ENCODE measurements at regions of chr14 and their contacts with region 1.

Region 1: GRCh38 chr14:44912041-44912869 is 49.5 kb downstream of the KLHL28 start:
- DNase-seq: no peak
- H3K4me3 Mint-ChIP-seq: peak overlapping the region; percentile 52
- H3K27ac Mint-ChIP-seq: no peak overlapping the region
- H3K4me1 Mint-ChIP-seq: no peaks in the 10 kb centered on the region
- H3K27me3 Mint-ChIP-seq: peaks cover 17% of the 10 kb centered on the region
- CTCF ChIP-seq: no peak

Region 2: DNA sequence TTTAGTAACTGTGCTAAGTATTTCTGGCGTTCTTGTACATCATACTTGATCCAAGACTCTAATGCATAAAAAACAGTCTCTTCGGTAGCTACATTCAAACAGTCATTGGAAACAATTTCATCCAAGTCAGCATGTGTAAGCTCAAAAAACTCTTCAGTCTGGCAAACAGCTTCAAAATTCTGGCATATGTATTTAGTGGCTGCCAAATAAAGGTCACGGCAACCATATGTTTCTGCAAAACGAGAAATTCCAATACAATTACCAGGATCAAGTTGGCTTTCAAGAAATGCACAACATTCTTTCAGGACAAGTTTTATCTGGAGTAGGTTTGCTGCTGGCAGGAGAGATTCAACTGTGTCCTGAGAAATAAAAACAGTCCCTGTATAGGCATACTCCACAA is 33.0 kb after region 1 on chr14:
- CTCF ChIA-PET with region 1: no interaction called
- intact Hi-C with region 1: no loop called
- DNase-seq: no peak
- H3K4me3 Mint-ChIP-seq: no peak overlapping the region
- H3K27ac Mint-ChIP-seq: no peak overlapping the region
- H3K4me1 Mint-ChIP-seq: no peaks in the 10 kb centered on the region
- H3K27me3 Mint-ChIP-seq: no peaks in the 10 kb centered on the region
- CTCF ChIP-seq: no peak

Region 3: GRCh38 chr14:45083971-45084722 is 171.9 kb after region 1 on chr14 and contains the start of gene PRPF39:
- CTCF ChIA-PET with region 1: no interaction called
- intact Hi-C with region 1: loop called (anchors 10 kb)
- DNase-seq: peak; percentile 96
- H3K4me3 Mint-ChIP-seq: peak within 1 kb of the TSS; percentile 96
- H3K27ac Mint-ChIP-seq: peak within 1 kb of the TSS; percentile 87
- H3K4me1 Mint-ChIP-seq: peaks cover 34% of the 10 kb centered on the region
- H3K27me3 Mint-ChIP-seq: no peaks in the 10 kb centered on the region
- CTCF ChIP-seq: no peak
- total RNA-seq, gene PRPF39: 34.2 and 35.8 TPM in 2 replicates

Region 4: GRCh38 chr14:45134051-45134958 is 222.1 kb after region 1 on chr14 and contains the start of gene FKBP3:
- CTCF ChIA-PET with region 1: no interaction called
- intact Hi-C with region 1: loop called (anchors 2 kb)
- DNase-seq: peak; percentile 92
- H3K4me3 Mint-ChIP-seq: peak within 1 kb of the TSS; percentile 96
- H3K27ac Mint-ChIP-seq: peak within 1 kb of the TSS; percentile 93
- H3K4me1 Mint-ChIP-seq: peaks cover 16% of the 10 kb centered on the region
- H3K27me3 Mint-ChIP-seq: no peaks in the 10 kb centered on the region
- CTCF ChIP-seq: no peak
- total RNA-seq, gene FKBP3: 68.9 and 72.8 TPM in 2 replicates

Region 5: DNA sequence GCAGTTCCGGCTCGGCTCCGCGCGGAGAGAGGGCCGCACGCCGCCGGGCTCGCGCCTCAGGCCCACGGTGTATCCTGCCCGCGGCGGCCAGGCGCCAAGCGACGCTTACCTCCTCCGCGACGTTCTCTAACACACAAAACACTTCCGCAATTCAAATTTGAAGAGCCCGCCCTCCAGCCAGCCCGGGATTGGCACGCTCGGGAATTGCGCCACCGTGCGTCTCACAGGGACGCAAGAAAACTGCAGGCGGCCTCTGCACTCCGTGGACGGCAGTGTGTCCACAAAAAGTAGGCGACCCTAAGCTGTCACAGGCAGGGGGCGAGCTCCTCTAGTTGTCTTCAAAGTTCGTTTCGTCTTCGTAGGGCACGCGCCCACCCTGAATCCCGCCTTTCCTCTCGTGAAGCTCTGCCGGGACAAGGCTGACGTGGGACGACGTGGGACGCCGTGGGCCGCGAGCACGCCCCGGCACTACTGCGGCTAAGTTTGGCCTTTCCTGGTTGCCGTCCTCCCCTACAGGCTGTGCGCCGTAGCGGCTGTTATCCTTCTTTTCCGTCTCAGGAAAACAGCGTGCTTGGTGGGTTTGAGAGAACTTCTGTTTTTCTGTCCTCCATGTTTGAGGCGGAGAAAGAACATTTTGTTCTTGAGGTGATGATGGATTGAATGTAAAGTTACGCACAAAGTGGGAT is 341.0 kb after region 1 on chr14 and contains the start of gene MIS18BP1:
- CTCF ChIA-PET with region 1: no interaction called
- intact Hi-C with region 1: loop called (anchors 5 kb)
- DNase-seq: peak; percentile 95
- H3K4me3 Mint-ChIP-seq: peak within 1 kb of the TSS; percentile 94
- H3K27ac Mint-ChIP-seq: peak within 1 kb of the TSS; percentile 94
- H3K4me1 Mint-ChIP-seq: peaks cover 7% of the 10 kb centered on the region
- H3K27me3 Mint-ChIP-seq: no peaks in the 10 kb centered on the region
- CTCF ChIP-seq: peak; percentile 69
- total RNA-seq, gene MIS18BP1: 37.7 and 47.4 TPM in 2 replicates

Region 6: GRCh38 chr14:45267071-45267470 is 354.8 kb after region 1 on chr14:
- CTCF ChIA-PET with region 1: interaction called, 14 read pairs
- intact Hi-C with region 1: loop called (anchors 1 kb)
- DNase-seq: no peak
- H3K4me3 Mint-ChIP-seq: no peak overlapping the region
- H3K27ac Mint-ChIP-seq: no peak overlapping the region
- H3K4me1 Mint-ChIP-seq: peaks cover 9% of the 10 kb centered on the region
- H3K27me3 Mint-ChIP-seq: no peaks in the 10 kb centered on the region
- CTCF ChIP-seq: no peak

Region 7: DNA sequence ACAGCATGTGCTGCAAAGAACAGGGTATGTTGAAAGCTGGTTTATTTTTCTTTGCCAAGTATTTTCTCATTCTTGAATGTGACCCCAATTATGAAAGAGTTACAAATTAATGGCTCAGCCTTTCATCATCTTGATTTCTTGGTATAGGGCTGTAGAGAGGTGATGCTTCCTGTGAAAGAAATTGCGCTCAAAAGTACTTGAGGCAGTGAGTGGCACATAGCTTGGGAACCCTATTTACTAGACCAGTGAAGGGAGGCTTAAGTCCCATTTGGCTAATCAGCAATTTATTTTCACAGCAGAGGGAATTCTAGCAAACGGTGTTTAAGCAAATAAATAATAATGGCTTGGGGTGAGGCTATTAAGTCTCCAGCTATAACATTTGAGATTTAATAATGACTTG is 494.7 kb after region 1 on chr14:
- CTCF ChIA-PET with region 1: no interaction called
- intact Hi-C with region 1: no loop called
- DNase-seq: no peak
- H3K4me3 Mint-ChIP-seq: no peak overlapping the region
- H3K27ac Mint-ChIP-seq: no peak overlapping the region
- H3K4me1 Mint-ChIP-seq: no peaks in the 10 kb centered on the region
- H3K27me3 Mint-ChIP-seq: no peaks in the 10 kb centered on the region
- CTCF ChIP-seq: no peak